ENCODE measurements at regions of chr16 and their contacts with region 1.

Region 1: DNA sequence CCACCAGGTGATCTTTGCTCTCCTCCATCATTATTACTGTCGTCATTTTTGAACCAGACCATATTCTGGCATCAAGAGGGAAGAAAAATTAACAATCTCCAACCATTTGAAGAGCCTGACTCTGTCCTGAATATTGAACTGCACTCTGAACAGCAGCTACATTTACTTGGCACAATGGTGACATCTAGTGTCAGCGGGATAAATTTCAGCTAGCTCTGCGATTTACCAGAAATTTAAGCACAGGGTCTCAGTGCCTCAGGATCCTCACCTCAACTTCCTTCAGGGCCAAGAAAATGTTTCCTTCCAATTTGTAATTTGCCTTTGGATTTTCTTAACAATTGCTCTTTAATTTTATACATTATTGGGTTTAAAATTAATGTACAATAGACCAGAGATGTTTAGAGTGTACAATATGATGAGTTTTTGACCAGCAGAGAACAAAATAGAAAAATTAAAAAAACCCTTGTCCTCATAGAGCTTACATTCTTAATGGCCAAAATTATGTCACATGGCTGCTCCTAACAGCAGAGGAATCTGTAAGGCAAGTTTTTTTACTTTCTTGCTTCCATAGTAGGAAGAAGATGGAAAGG is 10.7 kb upstream of the ZNF19 start:
- DNase-seq: peak; percentile 36
- H3K4me3 ChIP-seq: no peak overlapping the region
- H3K27ac ChIP-seq: no peak overlapping the region
- H3K4me1 ChIP-seq: no peaks in the 10 kb centered on the region
- H3K27me3 ChIP-seq: no peaks in the 10 kb centered on the region
- CTCF ChIP-seq: peak in 3 of 4 experiments; percentile 51 to 68 (median 55)
- POLR2A ChIP-seq: no peak

Region 2: DNA sequence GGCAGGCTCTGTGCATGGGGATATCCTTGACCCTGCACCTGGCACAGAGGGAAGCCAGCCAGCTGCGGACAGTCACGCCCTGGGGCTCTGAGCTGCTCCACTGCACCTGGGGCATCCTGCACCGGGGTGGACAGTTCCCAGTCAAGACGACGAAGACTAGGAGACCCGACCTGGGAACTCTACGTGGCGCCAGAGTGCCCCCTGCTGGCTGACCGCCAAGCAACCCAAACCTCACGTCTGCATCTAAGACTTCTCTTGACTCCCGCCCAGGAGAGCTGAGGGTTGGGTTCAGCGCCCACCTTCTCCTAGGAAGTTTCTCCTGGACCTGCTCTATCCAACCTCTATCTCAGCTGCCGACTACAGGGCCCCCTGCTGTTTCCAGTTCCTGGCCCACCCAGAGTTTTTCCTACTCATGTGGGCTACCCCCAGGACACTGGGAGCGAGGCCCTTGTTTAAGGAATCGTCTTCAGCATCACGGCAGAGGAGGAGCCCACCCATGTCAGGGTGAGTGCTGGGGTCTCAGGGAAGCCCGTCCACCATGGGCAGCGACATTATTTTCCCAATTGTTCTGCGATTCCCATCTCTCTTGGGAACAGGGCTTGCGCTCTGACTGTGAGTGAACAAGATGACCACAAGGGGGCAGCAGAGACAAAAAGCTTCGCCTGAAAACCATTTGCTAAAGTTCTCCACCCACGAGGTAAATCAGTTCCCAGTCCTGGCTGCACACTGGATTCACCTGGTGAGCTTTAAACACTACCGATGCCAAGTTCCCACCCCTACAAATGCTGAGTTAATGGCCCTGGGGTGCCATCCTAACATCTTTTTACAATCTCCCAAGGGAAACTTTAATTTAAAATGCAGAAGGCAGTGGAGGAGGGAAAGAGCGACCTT is 87.4 kb before region 1 on chr16:
- intact Hi-C with region 1: loop called (anchors 1 kb)
- DNase-seq: peak; percentile 72
- H3K4me3 ChIP-seq: no peak overlapping the region
- H3K27ac ChIP-seq: no peak overlapping the region
- H3K4me1 ChIP-seq: no peaks in the 10 kb centered on the region
- H3K27me3 ChIP-seq: peaks cover 2% of the 10 kb centered on the region
- CTCF ChIP-seq: peak; percentile 67 to 90 (median 80)
- POLR2A ChIP-seq: no peak

Region 3: DNA sequence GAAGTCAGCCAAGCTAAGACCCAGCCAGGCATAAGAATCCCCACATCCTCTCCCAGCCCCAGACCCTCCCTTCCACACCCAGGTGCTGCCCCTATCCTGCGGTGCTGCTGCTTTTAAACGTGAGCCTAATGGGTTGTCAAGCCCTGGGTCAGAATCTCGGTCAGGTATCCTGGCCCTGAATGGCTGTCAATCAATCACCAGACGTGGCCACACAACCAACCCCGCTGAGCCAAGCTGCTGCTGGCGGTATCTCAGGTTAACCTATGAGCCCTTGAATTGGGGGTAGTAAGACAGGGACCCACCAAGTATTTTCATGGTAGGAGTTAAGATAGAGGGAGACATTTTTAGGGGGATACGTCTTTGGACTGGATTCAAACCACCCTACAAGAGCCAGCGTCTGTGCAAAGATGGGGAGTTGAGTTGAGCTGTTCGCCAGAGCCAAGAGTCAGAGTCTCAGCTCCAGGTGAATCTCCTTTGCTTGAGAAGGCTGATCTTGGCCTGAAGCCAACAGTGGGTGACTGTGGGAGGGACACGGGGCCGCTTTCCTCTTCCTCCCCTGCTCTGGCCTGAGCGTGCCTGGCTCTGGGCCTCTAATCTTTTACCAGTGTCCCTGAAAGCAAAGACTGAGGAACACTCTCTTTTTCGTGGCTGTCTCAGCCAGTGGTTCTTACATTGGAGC is 63.5 kb before region 1 on chr16:
- intact Hi-C with region 1: no loop called
- DNase-seq: no peak
- H3K4me3 ChIP-seq: no peak overlapping the region
- H3K27ac ChIP-seq: no peak overlapping the region
- H3K4me1 ChIP-seq: no peaks in the 10 kb centered on the region
- H3K27me3 ChIP-seq: no peaks in the 10 kb centered on the region
- CTCF ChIP-seq: no peak
- POLR2A ChIP-seq: no peak

Region 4: GRCh38 chr16:71449020-71449419 is 50.9 kb before region 1 on chr16:
- intact Hi-C with region 1: no loop called
- DNase-seq: no peak
- H3K4me3 ChIP-seq: no peak overlapping the region
- H3K27ac ChIP-seq: no peak overlapping the region
- H3K4me1 ChIP-seq: no peaks in the 10 kb centered on the region
- H3K27me3 ChIP-seq: no peaks in the 10 kb centered on the region
- CTCF ChIP-seq: no peak
- POLR2A ChIP-seq: no peak